ENCODE measurements at regions of chr19 and their contacts with region 1.

Region 1: GRCh38 chr19:12139885-12140547 is at the start of gene ZNF20:
- DNase-seq: peak; percentile 95 to 97
- ATAC-seq: peak; percentile 99 to 100 (median 99)
- H3K4me3 ChIP-seq: peak within 1 kb of the TSS; percentile 77
- H3K27ac ChIP-seq: peak within 1 kb of the TSS; percentile 68
- H3K4me1 ChIP-seq: peaks cover 5% of the 10 kb centered on the region
- H3K27me3 ChIP-seq: no peaks in the 10 kb centered on the region
- CTCF ChIP-seq: no peak
- total RNA-seq, gene ZNF20: 0.46 to 0.63 (median 0.52) TPM in 3 of 4 donors, not detected in the other

Region 2: DNA sequence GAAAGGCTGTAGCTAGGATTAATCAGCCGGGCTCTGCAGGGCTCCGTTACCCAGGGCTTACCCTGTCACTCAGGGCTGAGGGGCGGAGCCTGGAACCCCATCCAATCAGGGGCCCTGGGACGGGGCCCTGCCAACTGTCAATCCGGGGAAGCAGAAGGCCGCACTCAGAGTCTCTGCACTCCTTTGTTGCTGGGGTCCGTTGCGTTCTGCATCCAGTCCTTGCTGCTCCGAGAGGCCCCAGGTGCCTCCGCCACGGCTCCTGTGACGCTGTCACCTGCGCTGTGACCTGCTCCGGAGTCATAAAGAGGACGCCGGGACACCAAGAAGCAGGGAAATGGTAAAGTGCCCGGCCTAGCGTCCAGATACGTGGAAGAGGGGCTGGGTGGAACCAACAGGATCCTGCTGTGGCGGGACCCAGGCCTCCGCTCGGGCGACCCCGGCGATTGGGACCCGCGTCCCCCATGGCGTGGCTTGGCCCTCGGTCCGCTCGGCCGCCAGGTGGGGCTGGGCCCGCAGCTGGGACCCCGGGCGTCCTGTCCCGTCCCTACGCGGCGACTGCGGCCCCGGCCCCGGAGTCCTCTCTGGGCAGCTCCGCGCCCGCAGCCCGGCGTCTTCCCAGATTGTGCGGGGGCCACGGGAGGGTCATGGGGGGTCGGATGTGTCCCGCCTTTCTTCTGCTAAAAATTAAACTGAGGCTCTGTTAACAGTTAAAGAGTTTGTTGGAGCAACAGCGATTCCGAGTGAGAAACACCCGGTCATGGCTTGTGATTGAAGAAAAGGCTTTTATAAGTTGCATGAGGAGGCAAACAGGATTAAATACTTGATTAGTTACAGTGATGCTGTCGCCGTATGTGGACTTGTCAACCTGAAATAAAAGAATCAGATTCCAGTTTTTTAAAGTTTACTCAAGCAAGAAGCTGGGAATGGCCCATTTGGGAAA is 341.4 kb before region 1 on chr19 and contains the start of gene ZNF491:
- intact Hi-C with region 1: loop called (anchors 2 kb)
- DNase-seq: peak; percentile 91 to 94
- ATAC-seq: peak; percentile 98 to 99 (median 98)
- H3K4me3 ChIP-seq: peak within 1 kb of the TSS; percentile 93
- H3K27ac ChIP-seq: peak within 1 kb of the TSS; percentile 87
- H3K4me1 ChIP-seq: peaks cover 14% of the 10 kb centered on the region
- H3K27me3 ChIP-seq: no peaks in the 10 kb centered on the region
- CTCF ChIP-seq: peak; percentile 14
- total RNA-seq, gene ZNF491: 0.66 to 1.9 (median 1.1) TPM

Region 3: DNA sequence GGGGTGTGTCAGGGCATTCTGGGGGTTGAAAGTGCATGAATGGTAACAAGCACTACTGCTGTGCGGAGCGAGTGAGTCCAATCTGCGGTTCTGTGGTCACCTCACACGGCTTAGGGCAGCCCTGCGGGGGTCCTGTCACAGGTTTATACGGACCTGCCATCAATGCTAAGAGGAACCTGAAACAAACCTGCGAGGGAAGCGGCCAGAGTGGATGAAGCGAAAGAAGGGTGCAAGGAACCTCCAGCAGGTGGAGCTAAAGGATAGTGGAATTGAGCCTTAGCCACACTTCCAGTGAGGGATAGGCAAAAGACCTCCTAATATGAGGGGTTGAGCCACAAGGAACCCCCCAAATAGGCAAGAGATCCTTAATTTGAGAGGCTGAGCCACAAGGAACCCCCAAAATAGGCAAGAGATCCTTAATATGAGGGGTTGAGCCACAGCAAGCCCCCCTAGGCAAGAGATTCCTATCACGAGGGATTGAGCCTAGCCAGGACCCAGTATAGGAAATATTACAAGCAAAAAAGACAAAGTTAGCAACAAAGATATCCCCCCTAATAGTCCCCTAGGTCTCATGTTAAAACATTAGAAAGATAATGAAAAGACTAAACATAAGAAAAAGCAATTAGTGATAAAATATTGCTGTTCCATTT is 258.7 kb before region 1 on chr19:
- intact Hi-C with region 1: loop called (anchors 1 to 5 kb)
- DNase-seq: peak in 1 of 2 donors; percentile 16
- ATAC-seq: peak; percentile 57 to 89 (median 66)
- H3K4me3 ChIP-seq: no peak overlapping the region
- H3K27ac ChIP-seq: no peak overlapping the region
- H3K4me1 ChIP-seq: peaks cover 2% of the 10 kb centered on the region
- H3K27me3 ChIP-seq: no peaks in the 10 kb centered on the region
- CTCF ChIP-seq: peak; percentile 68

Region 4: GRCh38 chr19:11924886-11925650 is 214.9 kb before region 1 on chr19 and contains the start of gene ZNF700:
- intact Hi-C with region 1: loop called (anchors 2 to 10 kb)
- DNase-seq: peak; percentile 93 to 95
- ATAC-seq: peak; percentile 99 to 100 (median 99)
- H3K4me3 ChIP-seq: peak within 1 kb of the TSS; percentile 99
- H3K27ac ChIP-seq: peak within 1 kb of the TSS; percentile 95
- H3K4me1 ChIP-seq: peaks cover 5% of the 10 kb centered on the region
- H3K27me3 ChIP-seq: no peaks in the 10 kb centered on the region
- CTCF ChIP-seq: no peak
- total RNA-seq, gene ZNF700: 2.6 to 3.3 (median 3.1) TPM

Region 5: DNA sequence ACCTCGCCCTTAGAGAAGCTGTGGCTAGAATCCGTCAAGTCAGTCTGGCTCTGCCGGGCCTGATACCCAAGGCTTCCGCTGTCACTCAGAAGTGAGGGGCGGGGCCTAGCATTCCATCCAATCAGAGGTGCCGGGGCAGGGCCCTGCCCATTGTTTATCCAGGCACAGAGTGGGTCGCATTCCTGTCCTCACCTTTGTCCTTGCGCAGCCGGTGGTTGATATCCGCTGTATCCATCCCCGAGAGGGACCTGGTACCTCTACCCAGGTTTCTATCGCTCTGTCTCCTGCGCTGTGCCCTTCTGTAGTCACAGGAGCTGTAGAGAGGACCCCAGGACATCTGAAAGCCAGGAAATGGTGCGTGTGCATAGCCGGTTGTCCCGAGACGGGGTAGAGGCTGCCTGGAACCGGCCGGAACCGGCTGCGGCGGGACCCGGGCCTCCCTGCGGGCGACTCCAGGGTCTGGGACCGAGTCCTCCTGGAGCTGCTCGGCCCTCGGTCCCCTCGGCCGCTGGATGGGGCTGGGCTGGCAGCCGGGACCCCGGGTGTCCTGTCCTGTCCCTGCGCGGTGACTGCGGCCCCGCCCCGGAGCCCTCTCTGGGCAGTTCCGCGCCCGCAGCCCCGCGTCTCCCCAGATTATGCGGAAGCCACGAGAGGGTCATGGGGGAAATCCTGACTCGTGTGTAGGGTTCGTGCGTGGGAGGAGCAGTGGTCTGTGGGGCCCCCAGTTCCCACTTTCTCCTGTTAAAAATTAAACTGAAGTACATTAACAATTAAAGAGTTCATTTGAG is 175.0 kb before region 1 on chr19 and contains the start of gene ZNF763:
- intact Hi-C with region 1: loop called in 1 of 2 experiments (anchors 2 kb)
- DNase-seq: peak; percentile 92 to 94
- ATAC-seq: peak; percentile 96 to 99 (median 98)
- H3K4me3 ChIP-seq: peak within 1 kb of the TSS; percentile 71
- H3K27ac ChIP-seq: peak within 1 kb of the TSS; percentile 63
- H3K4me1 ChIP-seq: peaks cover 10% of the 10 kb centered on the region
- H3K27me3 ChIP-seq: no peaks in the 10 kb centered on the region
- CTCF ChIP-seq: no peak
- total RNA-seq, gene ZNF763: 0.22 to 1.6 (median 0.81) TPM

Region 6: DNA sequence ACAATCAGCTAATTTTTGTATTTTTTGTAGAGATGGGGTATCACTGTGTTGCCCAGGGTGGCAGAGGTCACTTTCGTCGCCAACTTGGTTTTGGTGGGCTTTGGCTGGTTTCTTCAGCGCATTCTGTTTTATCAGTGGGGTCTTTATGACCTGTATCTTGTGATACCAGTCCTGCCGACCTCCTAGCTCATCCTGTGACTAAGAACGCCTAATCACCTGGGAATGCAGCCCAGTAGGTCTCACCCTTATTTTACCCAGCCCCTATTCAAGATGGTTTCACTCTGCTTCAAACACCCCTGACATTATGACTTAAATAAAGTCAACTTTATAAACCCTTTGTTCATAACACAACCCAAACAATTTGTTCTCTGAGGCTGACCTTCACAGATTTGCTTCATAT is 84.2 kb before region 1 on chr19:
- intact Hi-C with region 1: loop called (anchors 1 to 2 kb)
- DNase-seq: no peak
- ATAC-seq: no peak
- H3K4me3 ChIP-seq: no peak overlapping the region
- H3K27ac ChIP-seq: no peak overlapping the region
- H3K4me1 ChIP-seq: peaks cover 6% of the 10 kb centered on the region
- H3K27me3 ChIP-seq: no peaks in the 10 kb centered on the region
- CTCF ChIP-seq: no peak

Region 7: GRCh38 chr19:12484371-12485051 is 344.5 kb after region 1 on chr19 and contains the start of gene ZNF709:
- intact Hi-C with region 1: no loop called
- DNase-seq: peak; percentile 87 to 93
- ATAC-seq: peak; percentile 96 to 100 (median 98)
- H3K4me3 ChIP-seq: peak within 1 kb of the TSS; percentile 85
- H3K27ac ChIP-seq: peak within 1 kb of the TSS; percentile 69
- H3K4me1 ChIP-seq: peaks cover 15% of the 10 kb centered on the region
- H3K27me3 ChIP-seq: no peaks in the 10 kb centered on the region
- CTCF ChIP-seq: no peak
- total RNA-seq, gene ZNF709: 1.3 to 1.8 (median 1.7) TPM in 3 of 4 donors, not detected in the other